Activated B cell treated with CpG ODN at 0.5 μM for 24 hours (primary cell): ENCODE measurements at regions of chr9 and their contacts with region 1.

Region 1: DNA sequence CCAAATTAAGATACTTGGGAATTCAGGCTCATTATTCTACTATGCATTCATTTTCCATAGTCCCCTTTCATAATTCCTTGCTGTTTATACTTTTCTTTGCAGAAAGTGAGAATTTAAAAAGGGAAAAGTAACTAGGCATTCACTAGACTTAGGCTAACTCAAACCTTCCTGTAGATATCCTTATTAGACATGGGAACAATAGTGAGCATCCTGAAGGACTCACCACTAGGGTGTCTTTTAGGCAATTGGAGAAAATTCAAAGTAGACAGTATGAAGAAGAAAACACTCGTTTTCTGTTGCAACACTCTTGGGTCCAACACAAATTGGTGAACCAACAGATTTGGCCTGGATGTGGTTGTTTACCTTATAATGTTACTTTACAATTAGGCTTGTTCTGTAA is 213.2 kb upstream of the GRIN3A start:
- DNase-seq: no peak
- ATAC-seq: no peak
- H3K4me3 Mint-ChIP-seq: no peak overlapping the region
- H3K27ac Mint-ChIP-seq: no peak overlapping the region
- H3K4me1 Mint-ChIP-seq: no peaks in the 10 kb centered on the region
- H3K27me3 Mint-ChIP-seq: no peaks in the 10 kb centered on the region
- CTCF ChIP-seq: no peak

Region 2: GRCh38 chr9:101966691-101967090 is 15.1 kb after region 1 on chr9:
- CTCF ChIA-PET with region 1: no interaction called
- POLR2A ChIA-PET with region 1: no interaction called
- intact Hi-C with region 1: loop called (anchors 1 kb)
- DNase-seq: no peak
- ATAC-seq: no peak
- H3K4me3 Mint-ChIP-seq: no peak overlapping the region
- H3K27ac Mint-ChIP-seq: no peak overlapping the region
- H3K4me1 Mint-ChIP-seq: no peaks in the 10 kb centered on the region
- H3K27me3 Mint-ChIP-seq: no peaks in the 10 kb centered on the region
- CTCF ChIP-seq: no peak